Posterior vena cava (tissue), 2 donors: ENCODE measurements at regions of chr2 and their contacts with region 1.

Region 1: GRCh38 chr2:24418166-24418841 is 58.0 kb upstream of the ITSN2 start:
- DNase-seq: no peak

Region 2: DNA sequence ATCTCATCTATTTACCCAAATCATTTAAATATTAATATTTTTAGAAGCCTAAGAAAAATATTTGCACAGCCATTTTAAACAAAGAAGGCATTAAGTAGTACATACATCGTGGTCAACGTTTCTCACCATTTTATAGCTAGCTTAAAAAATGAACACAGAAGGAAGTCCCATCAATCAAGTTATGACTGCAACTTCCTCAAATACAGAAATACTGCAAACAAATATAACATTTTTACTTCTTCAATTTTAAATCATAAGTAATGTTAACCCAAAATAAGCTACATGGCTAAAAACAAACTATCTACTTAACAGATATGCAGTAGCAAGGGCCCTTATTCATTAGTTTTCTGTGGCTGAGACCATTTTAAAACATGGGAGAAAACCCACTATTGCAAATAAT is 88.6 kb before region 1 on chr2:
- intact Hi-C with region 1: no loop called
- DNase-seq: no peak

Region 3: GRCh38 chr2:24827321-24828237 is 409.3 kb after region 1 on chr2:
- intact Hi-C with region 1: loop called (anchors 5 kb)
- DNase-seq: peak; percentile 90